ENCODE measurements at regions of chr1 and their contacts with region 1.

Region 1: DNA sequence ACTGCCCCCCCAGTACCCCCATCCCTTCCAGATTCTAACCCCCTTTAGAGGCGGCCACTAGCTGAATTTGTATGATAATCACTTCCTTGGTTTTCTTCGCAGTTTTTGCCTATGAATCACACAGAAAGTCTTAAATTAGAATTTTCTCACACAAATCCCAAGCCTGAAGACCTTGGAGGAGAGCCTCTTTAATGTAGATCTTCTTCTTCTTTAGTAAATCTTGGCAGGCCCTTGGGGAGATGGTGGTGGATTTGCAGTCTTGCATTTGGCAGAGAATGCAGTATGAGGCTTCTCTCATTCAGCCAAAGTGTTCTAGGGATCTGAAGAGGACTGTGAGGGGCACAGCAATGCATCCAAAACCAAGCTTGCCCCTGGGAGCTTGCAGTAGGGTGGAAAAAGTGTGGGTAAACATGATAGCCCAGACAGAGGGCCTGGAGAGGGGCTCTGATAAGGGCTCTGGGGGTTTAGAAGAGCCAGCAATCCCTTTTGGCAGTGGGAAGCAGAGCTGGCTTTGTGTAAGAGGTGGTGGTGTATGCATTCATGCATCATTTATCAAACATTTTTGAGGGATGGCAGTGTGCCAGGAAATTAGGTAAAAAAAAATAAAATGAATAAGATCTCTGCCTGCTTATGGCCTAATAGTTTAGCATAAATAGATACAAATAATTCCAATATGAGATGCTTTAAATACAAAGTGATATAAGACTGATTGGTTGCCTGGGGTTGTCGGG is 7.7 kb upstream of the CDC42 start:
- DNase-seq: peak; percentile 88
- ATAC-seq: peak; percentile 63
- H3K4me3 ChIP-seq: no peak overlapping the region
- H3K27ac ChIP-seq: peak overlapping the region; percentile 86
- H3K4me1 ChIP-seq: peaks cover 39% of the 10 kb centered on the region
- H3K27me3 ChIP-seq: no peaks in the 10 kb centered on the region
- CTCF ChIP-seq: no peak

Region 2: DNA sequence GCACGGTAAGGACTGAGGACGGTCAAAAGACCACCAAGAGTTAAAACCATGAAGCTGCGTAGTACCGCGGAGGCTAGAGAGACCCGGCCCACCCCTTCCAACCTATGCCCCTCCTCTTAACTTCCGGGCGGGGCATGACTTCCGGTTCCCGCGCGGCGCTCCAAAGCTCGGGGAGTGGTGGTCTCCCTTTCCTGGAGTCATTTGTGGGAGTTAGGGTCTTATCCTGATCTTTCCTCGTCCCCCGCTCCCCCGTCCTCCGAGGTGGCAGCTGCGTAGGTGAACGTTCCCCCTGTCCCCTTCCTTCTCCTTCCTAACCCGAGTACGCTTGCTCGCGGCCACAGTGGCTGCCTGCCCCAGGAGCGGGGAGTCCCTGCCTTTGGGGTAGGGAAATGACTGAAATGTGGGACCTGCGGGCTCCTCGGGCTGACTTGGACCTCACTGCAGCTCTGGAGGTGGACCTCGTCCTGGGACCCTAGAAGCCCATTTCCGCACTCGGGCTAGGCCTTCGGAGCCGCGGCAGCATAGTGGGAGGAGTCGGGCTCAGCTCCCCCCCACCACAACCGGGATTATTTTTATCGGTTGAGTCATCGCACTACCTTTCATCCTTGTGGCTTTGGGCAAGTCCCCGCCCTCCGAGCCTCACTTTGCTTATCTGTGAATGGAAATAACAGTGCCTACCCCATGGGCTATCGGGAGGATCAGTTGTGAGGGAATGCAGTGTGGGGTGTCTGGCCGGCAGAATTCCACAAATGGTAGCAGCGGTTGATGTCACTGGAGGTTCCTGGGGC is 19.3 kb before region 1 on chr1:
- CTCF ChIA-PET with region 1: no interaction called
- POLR2A ChIA-PET with region 1: no interaction called
- intact Hi-C with region 1: loop called (anchors 2 kb)
- DNase-seq: peak; percentile 89
- ATAC-seq: peak; percentile 87
- H3K4me3 ChIP-seq: peak overlapping the region; percentile 91
- H3K27ac ChIP-seq: peak overlapping the region; percentile 96
- H3K4me1 ChIP-seq: peaks cover 11% of the 10 kb centered on the region
- H3K27me3 ChIP-seq: no peaks in the 10 kb centered on the region
- CTCF ChIP-seq: no peak

Region 3: GRCh38 chr1:22362626-22363402 is 318.0 kb after region 1 on chr1:
- CTCF ChIA-PET with region 1: no interaction called
- POLR2A ChIA-PET with region 1: no interaction called
- intact Hi-C with region 1: no loop called
- DNase-seq: no peak
- ATAC-seq: no peak
- H3K4me3 ChIP-seq: no peak overlapping the region
- H3K27ac ChIP-seq: no peak overlapping the region
- H3K4me1 ChIP-seq: no peaks in the 10 kb centered on the region
- H3K27me3 ChIP-seq: peaks cover 44% of the 10 kb centered on the region
- CTCF ChIP-seq: no peak